ENCODE measurements at regions of chr2 and their contacts with region 1.

Region 1: DNA sequence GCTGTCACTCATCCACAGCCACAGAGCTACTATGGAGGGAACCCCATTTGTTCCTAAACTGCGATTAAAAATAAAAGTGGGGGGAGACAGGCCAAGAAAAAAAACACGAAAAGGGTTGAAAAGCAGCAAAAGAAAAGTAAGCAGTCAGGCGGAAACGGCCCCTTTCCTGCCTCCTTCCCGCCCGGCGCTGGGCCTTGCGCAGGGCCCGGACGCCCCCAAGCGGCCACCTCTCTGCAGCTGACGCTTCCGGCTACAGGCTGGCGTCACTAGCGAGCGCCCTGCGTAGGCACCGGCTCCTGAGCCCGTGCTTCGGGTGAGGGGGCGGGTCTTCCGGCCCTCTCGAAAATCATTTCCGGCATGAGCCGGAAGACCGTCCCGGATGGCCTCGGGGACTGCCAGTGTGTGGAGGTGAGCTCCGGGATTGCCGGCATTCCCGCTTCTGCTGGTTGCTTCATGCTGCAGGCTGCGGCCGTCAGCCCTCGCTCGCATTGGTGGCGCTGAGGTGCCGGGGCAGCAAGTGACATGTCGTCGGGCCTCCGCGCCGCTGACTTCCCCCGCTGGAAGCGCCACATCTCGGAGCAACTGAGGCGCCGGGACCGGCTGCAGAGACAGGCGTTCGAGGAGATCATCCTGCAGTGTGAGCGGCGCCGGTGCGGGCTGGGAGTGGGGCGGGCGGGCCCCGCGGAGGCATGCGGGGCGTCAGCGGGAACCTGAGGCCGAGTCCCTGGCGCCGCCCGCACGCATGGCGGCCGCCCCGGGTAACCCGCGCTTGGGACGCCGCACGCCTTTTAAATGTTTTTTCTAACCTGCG is at the start of gene ATG16L1:
- H3K4me3 Mint-ChIP-seq: peak within 1 kb of the TSS; percentile 91
- H3K27ac Mint-ChIP-seq: peak within 1 kb of the TSS; percentile 91
- H3K4me1 Mint-ChIP-seq: peaks cover 66% of the 10 kb centered on the region
- H3K27me3 Mint-ChIP-seq: no peaks in the 10 kb centered on the region

Region 2: DNA sequence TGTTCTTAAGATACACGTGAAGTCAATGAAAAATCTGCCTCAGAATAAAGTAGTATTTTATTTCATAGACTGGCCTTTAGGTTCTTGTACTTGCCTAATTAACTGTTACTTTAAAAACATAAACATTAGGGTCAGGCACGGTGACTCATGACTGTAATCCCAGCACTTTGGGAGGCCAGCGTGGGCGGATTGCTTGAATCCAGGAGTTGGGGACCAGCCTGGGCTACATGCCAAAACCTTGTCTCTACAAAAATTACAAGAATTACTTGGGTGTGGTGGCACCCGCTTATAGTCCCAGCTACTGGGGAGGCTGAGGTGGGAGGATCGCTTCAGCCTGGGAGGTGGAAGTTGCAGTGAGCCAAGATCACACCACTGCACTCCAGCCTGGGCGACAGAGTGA is 397.4 kb before region 1 on chr2:
- intact Hi-C with region 1: loop called (anchors 5 kb)
- H3K4me3 Mint-ChIP-seq: no peak overlapping the region
- H3K27ac Mint-ChIP-seq: no peak overlapping the region
- H3K4me1 Mint-ChIP-seq: no peaks in the 10 kb centered on the region
- H3K27me3 Mint-ChIP-seq: no peaks in the 10 kb centered on the region

Region 3: GRCh38 chr2:233061591-233062450 is 189.7 kb before region 1 on chr2:
- intact Hi-C with region 1: loop called (anchors 5 kb)
- H3K4me3 Mint-ChIP-seq: peak overlapping the region; percentile 95
- H3K27ac Mint-ChIP-seq: peak overlapping the region; percentile 92
- H3K4me1 Mint-ChIP-seq: peaks cover 71% of the 10 kb centered on the region
- H3K27me3 Mint-ChIP-seq: no peaks in the 10 kb centered on the region

Region 4: DNA sequence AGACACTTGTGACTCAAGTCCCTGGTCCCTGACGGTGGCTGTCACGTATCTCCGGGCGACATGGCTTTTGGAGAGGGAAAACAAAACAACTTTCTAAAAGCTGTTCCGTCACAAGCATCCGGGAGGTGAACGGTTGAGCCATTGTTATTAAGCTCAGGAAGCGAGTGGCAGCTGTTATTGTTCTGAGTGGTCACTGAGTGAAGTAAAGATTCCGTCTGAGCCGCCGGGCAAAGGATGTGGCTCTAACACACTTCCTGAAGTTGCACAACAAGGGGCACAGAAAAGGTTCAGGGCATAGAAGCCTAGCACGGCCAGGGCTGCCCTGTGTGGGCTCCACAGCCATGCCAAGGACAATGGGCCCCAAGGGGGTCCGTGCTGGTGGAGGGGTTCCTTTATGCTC is 167.0 kb before region 1 on chr2:
- intact Hi-C with region 1: loop called (anchors 1 kb)
- H3K4me3 Mint-ChIP-seq: peak overlapping the region; percentile 64
- H3K27ac Mint-ChIP-seq: peak overlapping the region; percentile 86
- H3K4me1 Mint-ChIP-seq: peaks cover 96% of the 10 kb centered on the region
- H3K27me3 Mint-ChIP-seq: no peaks in the 10 kb centered on the region

Region 5: GRCh38 chr2:233165895-233166661 is 85.4 kb before region 1 on chr2:
- intact Hi-C with region 1: loop called (anchors 2 kb)
- H3K4me3 Mint-ChIP-seq: peak overlapping the region; percentile 32
- H3K27ac Mint-ChIP-seq: no peak overlapping the region
- H3K4me1 Mint-ChIP-seq: peaks cover 15% of the 10 kb centered on the region
- H3K27me3 Mint-ChIP-seq: no peaks in the 10 kb centered on the region

Region 6: GRCh38 chr2:233202531-233202944 is 49.0 kb before region 1 on chr2:
- intact Hi-C with region 1: loop called (anchors 2 kb)
- H3K4me3 Mint-ChIP-seq: peak overlapping the region; percentile 39
- H3K27ac Mint-ChIP-seq: peak overlapping the region; percentile 86
- H3K4me1 Mint-ChIP-seq: peaks cover 54% of the 10 kb centered on the region
- H3K27me3 Mint-ChIP-seq: no peaks in the 10 kb centered on the region

Region 7: DNA sequence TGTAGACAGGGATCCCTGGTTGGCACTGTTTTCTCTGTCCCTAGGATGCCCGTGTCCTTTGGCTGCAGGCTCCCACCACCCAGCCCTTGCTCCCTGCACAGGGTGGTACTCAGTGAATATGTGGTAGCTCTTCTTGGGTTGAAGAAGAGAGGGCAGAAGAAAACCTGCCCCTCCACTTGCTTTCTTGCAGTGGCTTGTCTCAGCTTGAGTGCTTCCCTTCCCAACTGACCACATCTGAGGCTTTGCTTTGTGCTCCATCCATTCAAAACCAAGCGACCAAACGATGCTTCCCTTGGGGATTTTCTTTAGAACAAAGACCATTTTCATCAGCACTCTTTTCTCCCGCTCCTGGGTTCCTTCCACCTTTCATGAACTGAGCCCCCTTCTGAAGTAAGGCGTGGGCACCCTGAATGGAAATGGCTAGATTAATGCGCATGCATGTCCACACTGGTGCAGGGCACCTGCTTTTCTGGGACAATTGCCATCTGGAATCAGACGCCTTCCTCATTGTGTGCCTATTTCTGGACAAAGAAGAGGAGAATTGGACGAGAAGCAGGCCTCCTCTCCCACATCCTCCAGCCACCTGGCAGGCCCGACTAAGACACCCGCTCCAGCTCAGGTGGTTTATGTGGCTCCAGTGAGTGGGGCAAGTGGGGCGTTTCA is 1186.3 kb after region 1 on chr2:
- intact Hi-C with region 1: no loop called
- H3K4me3 Mint-ChIP-seq: no peak overlapping the region
- H3K27ac Mint-ChIP-seq: peak overlapping the region; percentile 74
- H3K4me1 Mint-ChIP-seq: peaks cover 63% of the 10 kb centered on the region
- H3K27me3 Mint-ChIP-seq: peaks cover 3% of the 10 kb centered on the region

Measured in dendritic cell treated with granulocyte-macrophage colony-stimulating factor and Interleukin-4, amounts not matched to agents 40 ng/mL and 50 ng/mL, for 4 days (primary cell).